GM10248 (cell line): ENCODE measurements at regions of chr12 and their contacts with region 1.

Region 1: GRCh38 chr12:109264095-109264942 is 44.8 kb downstream of the FOXN4 start:
- DNase-seq: peak; percentile 85
- CTCF ChIP-seq: peak; percentile 72

Region 2: GRCh38 chr12:109276160-109276559 is 11.8 kb after region 1 on chr12:
- CTCF ChIA-PET with region 1: interaction called, 10 read pairs
- POLR2A ChIA-PET with region 1: no interaction called
- DNase-seq: no peak
- CTCF ChIP-seq: no peak

Region 3: DNA sequence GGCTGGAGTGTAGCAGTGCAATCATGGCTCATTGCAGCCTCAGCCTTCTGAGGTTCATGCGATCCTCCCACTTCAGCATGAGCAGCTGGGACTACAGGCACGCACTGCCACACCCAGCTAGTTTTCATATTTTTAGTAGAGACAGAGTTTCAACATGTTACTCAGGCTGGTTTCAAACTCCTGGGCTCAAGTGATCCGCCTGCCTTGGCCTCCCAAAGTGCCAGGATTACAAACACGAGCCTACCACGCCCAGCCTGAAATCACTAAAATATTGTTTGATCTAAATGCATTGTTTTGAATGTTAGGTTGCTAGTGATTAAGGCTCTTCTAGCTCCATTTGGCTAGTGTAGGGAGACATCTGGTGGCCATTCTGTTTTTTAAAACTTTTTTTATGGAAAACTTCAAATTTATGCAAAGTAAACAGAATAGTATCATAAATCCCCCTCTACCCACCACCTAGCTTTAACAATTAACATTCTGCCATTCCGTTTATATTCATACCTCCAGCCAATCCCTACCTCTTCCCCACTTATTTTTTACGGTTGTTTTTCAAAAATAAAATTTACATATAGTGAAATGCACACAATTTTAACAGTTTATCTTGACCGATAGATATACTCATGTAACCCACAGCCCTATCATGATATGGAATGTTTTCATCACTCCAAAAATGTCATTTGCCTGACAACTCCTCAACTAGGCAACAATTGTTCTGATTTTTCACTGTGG is 121.2 kb after region 1 on chr12:
- CTCF ChIA-PET with region 1: interaction called, 42 read pairs
- POLR2A ChIA-PET with region 1: no interaction called
- DNase-seq: peak; percentile 30
- CTCF ChIP-seq: peak; percentile 45

Region 4: DNA sequence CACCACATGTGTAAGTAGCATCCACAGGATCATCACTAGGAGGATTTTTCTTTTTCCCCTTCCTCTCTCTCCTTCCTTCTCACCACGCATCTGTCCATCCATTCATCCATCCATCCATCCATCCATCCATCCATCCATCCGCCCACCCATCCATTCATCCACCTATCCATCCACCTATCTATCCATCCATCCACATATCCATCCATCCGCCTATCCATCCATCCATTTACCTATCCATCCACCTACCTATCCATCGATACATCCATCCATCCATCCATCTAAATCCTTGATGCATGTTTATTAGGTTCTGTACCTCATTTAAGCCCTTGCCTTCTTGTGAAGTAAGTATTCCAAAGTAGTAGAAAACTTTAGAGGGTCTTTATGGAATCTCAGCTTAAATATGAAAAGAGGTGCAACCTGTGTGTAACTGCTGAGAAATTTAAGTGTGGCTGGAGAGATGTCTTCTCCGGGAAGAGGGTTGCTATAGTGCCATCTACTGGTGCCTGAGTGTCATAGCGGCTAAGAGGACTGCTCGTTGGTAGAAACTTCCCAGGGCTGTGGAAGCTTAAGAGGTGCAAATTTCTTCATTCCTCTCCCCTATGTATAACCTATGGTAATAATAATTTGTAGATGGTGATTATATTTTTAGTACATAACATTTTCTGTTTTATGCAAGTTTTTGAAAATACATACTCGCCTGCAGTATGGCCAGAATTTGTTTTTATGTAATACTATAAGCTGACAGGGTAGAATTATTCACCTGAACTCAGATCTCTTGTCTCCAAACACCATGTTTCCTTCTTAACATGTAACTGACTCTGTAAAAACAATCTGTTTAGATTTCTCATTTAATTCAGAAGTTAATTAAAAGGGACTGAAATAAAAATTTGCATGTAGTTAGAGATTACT is 129.4 kb after region 1 on chr12:
- CTCF ChIA-PET with region 1: interaction called, 42 read pairs
- POLR2A ChIA-PET with region 1: no interaction called
- DNase-seq: peak; percentile 79
- CTCF ChIP-seq: peak; percentile 91